Activated naive CD4-positive, alpha-beta T cell treated with anti-CD3 and anti-CD28 coated beads for 36 hours (primary cell): ENCODE measurements at regions of chrX and their contacts with region 1.

Region 1: GRCh38 chrX:41333744-41334259 is at the start of gene DDX3X:
- DNase-seq: peak; percentile 85
- H3K4me3 Mint-ChIP-seq: peak within 1 kb of the TSS; percentile 92
- H3K27ac Mint-ChIP-seq: peak within 1 kb of the TSS; percentile 99
- H3K4me1 Mint-ChIP-seq: peaks cover 22% of the 10 kb centered on the region
- H3K27me3 Mint-ChIP-seq: no peaks in the 10 kb centered on the region
- total RNA-seq, gene DDX3X: 163 to 171 TPM

Region 2: GRCh38 chrX:40169193-40170101 is 1164.4 kb before region 1 on chrX:
- CTCF ChIA-PET with region 1: no interaction called
- intact Hi-C with region 1: loop called (anchors 10 kb)
- DNase-seq: peak; percentile 92
- H3K4me3 Mint-ChIP-seq: peak overlapping the region; percentile 91
- H3K27ac Mint-ChIP-seq: peak overlapping the region; percentile 99
- H3K4me1 Mint-ChIP-seq: peaks cover 42% of the 10 kb centered on the region
- H3K27me3 Mint-ChIP-seq: no peaks in the 10 kb centered on the region

Region 3: DNA sequence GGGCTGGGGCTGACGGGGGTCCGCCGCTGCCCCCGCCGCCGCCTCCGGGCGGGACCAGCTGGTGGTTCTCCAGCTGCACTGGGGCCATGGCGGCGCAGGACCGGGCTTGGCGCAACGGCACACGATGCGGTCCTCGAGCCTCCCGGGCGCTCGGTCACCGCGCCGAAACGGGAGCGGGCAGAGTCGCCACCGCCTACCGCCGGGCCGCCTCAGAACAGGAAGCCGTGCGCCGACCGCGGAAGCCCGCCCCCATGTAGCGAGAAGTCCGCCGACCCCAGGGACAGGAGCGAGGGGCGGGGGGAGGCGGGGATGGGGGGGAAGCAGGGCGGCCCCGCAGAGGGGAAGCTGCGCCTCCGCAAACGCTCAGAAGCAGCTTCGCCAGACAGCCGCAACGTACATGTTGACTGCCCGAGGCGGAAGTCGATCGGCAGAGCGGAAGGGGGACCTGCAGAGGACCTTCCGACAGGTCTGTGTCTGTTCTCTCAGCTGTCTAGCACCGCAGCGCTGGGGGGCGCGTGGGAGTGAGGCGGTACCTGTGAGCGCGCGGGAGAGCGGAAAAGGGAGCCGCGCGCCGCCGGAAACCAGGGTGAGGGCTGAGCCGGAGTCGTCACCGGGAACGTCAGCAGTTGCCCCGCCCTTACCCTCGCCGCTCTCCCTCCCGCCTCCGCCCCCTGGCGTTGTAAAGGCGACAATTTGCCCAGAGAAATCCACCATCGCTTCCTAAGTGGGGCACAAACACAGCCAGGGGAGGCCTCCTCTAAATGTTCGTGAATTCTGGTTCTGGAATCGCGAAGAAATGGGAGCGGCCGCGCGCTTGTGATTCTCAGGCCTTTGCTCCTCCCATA is 598.3 kb before region 1 on chrX and contains the start of gene MED14:
- CTCF ChIA-PET with region 1: no interaction called
- intact Hi-C with region 1: loop called (anchors 2 kb)
- DNase-seq: peak; percentile 90
- H3K4me3 Mint-ChIP-seq: peak within 1 kb of the TSS; percentile 85
- H3K27ac Mint-ChIP-seq: peak within 1 kb of the TSS; percentile 97
- H3K4me1 Mint-ChIP-seq: peaks cover 43% of the 10 kb centered on the region
- H3K27me3 Mint-ChIP-seq: no peaks in the 10 kb centered on the region
- total RNA-seq, gene MED14: 47.3 to 50.8 TPM

Region 4: GRCh38 chrX:41180194-41180908 is 153.5 kb before region 1 on chrX:
- CTCF ChIA-PET with region 1: interaction called, 5 read pairs
- intact Hi-C with region 1: loop called (anchors 5 kb)
- DNase-seq: peak; percentile 67
- H3K4me3 Mint-ChIP-seq: peak overlapping the region; percentile 41
- H3K27ac Mint-ChIP-seq: peak overlapping the region; percentile 90
- H3K4me1 Mint-ChIP-seq: peaks cover 45% of the 10 kb centered on the region
- H3K27me3 Mint-ChIP-seq: no peaks in the 10 kb centered on the region

Region 5: DNA sequence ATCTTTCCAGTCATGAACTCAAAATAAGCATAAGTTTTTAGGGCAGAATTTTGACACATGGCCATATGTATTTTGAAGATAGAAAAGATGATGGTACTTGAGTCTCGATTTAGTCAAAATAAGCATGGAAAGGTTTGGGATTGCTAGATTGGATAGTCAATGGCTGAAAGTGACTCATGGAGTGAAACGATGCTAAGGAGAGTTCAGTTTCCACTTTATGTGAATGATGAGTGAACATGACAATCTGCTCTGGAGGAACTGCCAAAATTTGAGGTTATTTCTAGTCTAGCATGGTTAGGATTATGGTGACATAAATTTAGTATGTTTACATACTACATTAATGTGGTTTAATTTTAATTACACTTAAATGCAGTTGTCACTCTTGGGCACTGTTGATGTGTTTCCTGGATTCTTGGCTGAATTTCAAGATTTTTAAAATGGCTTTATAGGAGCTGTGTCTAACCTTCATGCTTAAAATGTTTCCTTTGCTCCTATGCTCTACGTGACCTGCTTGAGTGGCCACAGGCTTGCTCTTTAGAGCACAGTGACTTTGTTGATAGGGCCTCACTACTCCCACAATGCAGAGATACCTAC is 17.3 kb after region 1 on chrX:
- CTCF ChIA-PET with region 1: no interaction called
- intact Hi-C with region 1: loop called (anchors 2 kb)
- DNase-seq: no peak
- H3K4me3 Mint-ChIP-seq: no peak overlapping the region
- H3K27ac Mint-ChIP-seq: peak overlapping the region; percentile 70
- H3K4me1 Mint-ChIP-seq: peaks cover 43% of the 10 kb centered on the region
- H3K27me3 Mint-ChIP-seq: no peaks in the 10 kb centered on the region

Region 6: GRCh38 chrX:41391606-41392005 is 57.8 kb after region 1 on chrX:
- CTCF ChIA-PET with region 1: no interaction called
- intact Hi-C with region 1: no loop called
- DNase-seq: no peak
- H3K4me3 Mint-ChIP-seq: no peak overlapping the region
- H3K27ac Mint-ChIP-seq: no peak overlapping the region
- H3K4me1 Mint-ChIP-seq: peaks cover 4% of the 10 kb centered on the region
- H3K27me3 Mint-ChIP-seq: no peaks in the 10 kb centered on the region

Region 7: DNA sequence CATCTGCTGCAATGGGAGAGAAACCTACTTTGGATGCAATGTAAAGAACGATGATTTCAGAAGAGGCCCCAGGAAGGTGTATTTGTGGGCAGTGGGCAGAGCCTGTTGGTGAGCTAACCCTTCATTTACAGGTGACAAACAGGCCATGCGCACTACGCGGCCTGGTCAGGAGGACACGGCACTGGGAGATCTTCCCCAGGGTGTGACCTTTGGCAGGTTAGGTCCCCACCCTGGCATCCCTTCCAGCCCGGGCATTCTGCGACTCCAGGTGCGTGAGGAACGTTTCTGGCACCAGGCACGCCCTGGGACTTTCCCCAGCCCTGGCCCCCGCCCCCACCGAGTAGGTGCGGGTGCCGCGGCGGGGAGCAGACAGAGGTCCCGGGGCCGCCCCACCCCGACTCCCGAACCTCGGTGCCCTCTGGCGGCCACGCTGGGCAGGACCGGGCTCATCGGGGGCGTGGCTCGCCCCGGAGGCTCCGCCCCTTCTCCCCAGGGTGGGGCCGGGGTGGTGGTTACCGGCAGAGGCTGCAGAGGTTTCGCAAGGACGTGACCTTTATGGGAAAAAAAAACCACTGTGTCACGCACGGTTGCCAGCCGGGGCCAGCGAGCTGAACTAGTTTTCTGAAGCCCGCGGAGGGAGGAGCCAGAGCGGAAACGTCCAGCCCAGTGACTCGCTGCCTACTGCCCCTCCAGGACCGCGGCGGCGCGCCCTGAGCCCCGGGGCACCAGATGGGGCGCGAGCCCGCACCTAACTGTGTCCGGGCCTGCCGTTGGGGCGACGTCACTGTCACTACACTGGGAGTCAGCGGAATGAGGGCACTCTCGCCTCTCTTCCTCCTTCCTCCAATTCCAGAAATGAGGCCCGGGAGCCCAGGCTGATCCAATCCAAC is 108.4 kb after region 1 on chrX:
- CTCF ChIA-PET with region 1: no interaction called
- intact Hi-C with region 1: loop called (anchors 1 kb)
- DNase-seq: peak; percentile 86
- H3K4me3 Mint-ChIP-seq: peak overlapping the region; percentile 62
- H3K27ac Mint-ChIP-seq: peak overlapping the region; percentile 69
- H3K4me1 Mint-ChIP-seq: peaks cover 10% of the 10 kb centered on the region
- H3K27me3 Mint-ChIP-seq: no peaks in the 10 kb centered on the region